A549 (cell line): ENCODE measurements at regions of chr11 and their contacts with region 1.

Region 1: DNA sequence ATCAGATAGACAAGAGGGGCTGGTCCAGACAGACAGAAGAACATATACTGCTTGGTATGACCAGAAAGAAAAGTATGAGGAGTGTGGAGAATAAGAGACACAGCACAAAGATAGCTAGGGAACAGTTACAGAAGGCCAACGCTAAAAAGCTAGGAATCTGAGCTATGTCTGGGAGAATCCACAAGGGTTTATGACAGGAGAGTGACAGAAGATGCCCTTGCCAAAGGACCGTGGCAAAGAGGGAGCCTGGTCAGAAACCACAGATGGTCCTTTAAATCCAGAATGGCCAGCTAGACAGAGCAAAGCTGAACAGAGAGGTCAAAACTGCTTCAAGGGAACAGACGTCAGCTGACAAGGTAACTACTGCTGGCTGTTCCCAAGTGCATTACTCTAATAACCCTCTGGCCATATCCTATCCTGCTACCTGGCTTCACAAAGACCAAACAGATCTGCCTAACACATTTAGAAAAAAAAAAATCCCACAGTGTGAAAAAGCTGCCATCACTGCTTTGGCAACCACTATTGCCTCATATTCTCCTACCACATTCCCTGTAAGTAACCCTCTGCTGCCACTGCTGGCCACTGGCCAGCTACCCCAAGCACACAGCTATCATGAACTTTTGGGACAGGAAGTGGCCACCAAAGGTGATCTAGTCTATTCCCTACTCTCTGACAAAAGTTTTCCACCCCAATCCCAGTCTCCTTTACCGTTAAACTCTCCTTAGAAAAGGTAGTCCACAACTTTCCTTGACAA is 7.3 kb downstream of the SERGEF start:
- DNase-seq: no peak
- ATAC-seq: peak in 1 of 2 experiments; percentile 58; a peak in 1 of 6 replicates
- H3K4me3 ChIP-seq: no peak overlapping the region
- H3K27ac ChIP-seq: no peak overlapping the region
- H3K4me1 ChIP-seq: no peaks in the 10 kb centered on the region
- CTCF ChIP-seq: no peak
- EP300 ChIP-seq: no peak
- POLR2A ChIP-seq: no peak
- RAD21 ChIP-seq: no peak

Region 2: DNA sequence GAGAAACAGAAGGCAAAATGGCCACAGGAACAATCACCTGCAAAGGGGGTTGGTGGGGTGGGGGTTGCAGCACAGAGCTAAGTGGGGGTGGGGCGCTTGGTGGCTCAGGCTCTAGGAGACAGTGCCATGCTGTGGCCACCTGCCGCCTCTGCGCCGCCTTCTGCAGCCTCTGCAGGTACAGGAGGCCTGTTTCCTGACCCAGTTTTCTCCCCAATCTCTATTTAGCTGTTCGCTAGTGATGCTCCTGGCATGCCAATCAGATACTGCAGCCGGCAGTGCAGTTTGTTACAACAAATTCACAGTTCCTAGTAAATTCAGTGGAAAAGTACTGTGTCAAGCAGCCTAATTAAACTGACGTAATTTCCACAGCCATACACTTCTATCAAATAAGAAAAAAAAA is 99.1 kb before region 1 on chr11:
- CTCF ChIA-PET with region 1: no interaction called
- POLR2A ChIA-PET with region 1: no interaction called
- DNase-seq: peak in 1 of 2 experiments; percentile 20
- ATAC-seq: peak; percentile 68 to 77; a peak in 4 of 6 replicates
- H3K4me3 ChIP-seq: no peak overlapping the region
- H3K27ac ChIP-seq: no peak overlapping the region
- H3K4me1 ChIP-seq: no peaks in the 10 kb centered on the region
- CTCF ChIP-seq: no peak
- EP300 ChIP-seq: no peak
- POLR2A ChIP-seq: no peak
- RAD21 ChIP-seq: peak in 1 of 2 experiments; percentile 30; a peak in 2 of 5 replicates

Region 3: DNA sequence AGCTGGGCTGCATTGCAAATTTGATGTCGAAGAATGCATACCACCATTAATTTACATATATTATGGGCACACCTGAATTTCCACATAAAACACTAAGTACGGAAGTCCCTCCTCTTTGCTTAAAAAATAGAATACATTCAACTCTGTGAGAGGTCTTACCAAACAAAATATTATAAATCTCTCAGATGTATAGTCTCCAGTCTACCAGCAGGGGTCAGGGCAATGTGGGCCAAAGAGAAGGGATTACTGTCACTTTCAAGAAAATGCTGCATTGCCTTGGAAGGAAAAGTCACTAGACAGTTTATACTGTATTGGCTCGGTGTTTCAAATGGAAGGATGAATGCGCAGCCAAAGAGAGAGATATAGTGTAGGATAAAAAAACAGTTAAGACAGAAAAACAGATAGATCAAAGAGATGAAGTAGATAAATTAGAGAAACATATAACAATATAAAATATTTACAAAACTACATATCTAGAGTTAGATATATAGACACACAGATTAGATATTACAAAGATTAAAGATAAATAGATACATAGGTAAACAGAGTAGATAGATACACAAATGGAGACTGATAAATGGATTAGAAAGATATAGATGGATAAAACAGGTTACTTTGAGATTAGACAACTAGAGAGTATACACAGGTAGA is 13.6 kb before region 1 on chr11:
- CTCF ChIA-PET with region 1: interaction called, 12 read pairs
- POLR2A ChIA-PET with region 1: no interaction called
- DNase-seq: peak; percentile 65 to 70
- ATAC-seq: peak; percentile 62 to 88; a peak in 4 of 6 replicates
- H3K4me3 ChIP-seq: no peak overlapping the region
- H3K27ac ChIP-seq: no peak overlapping the region
- H3K4me1 ChIP-seq: no peaks in the 10 kb centered on the region
- CTCF ChIP-seq: peak; percentile 82
- EP300 ChIP-seq: no peak
- POLR2A ChIP-seq: no peak
- RAD21 ChIP-seq: peak; percentile 58 to 63

Region 4: DNA sequence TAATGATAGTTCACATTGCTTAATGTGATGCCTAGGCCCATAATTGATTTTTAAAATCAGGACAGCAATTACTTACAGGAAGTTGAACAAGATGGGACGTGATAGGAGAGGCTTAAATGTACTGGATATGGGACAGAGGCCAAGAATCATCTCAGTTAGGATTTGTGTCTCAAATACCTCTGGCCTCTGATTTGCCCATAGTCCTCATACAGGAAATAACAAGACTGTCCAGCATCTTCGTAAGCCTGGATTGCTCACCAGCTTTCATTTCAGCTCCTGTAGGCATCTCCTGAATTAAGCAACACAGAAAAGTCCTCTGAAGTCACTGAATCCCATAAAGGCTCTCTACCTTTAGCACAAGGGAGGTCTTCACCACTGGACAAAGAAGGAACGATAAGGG is 126.8 kb after region 1 on chr11 and contains the start of gene MRGPRX3:
- CTCF ChIA-PET with region 1: no interaction called
- POLR2A ChIA-PET with region 1: no interaction called
- DNase-seq: no peak
- ATAC-seq: no peak
- H3K4me3 ChIP-seq: no peak within 1 kb of the TSS
- H3K27ac ChIP-seq: no peak within 1 kb of the TSS
- H3K4me1 ChIP-seq: no peaks in the 10 kb centered on the region
- CTCF ChIP-seq: no peak
- EP300 ChIP-seq: no peak
- POLR2A ChIP-seq: no peak
- RAD21 ChIP-seq: no peak
- polyA plus RNA-seq, gene MRGPRX3: 0.08 TPM in 1 of 2 replicates, not detected in the other

Region 5: DNA sequence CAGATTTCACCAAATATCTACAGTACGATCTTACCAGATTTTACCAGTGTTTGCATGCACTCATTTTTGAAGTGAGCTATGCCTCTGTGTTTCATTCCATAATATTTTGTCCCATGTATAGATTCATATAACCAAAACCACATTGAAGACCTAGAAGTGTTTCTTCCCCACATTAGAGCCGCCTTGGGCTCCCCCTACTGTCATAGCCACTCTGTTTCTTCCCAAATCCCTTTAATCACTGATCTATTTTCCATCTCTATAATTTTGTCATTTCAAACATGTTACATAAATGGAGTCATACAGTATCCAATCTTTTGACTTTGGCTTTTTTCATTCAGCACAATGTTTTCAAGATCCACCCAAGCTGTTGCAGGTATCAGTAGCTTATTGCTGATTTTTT is 139.5 kb after region 1 on chr11:
- CTCF ChIA-PET with region 1: no interaction called
- POLR2A ChIA-PET with region 1: no interaction called
- DNase-seq: peak; percentile 7 to 11
- ATAC-seq: peak; percentile 60 to 62; a peak in 2 of 6 replicates
- H3K4me3 ChIP-seq: no peak overlapping the region
- H3K27ac ChIP-seq: no peak overlapping the region
- H3K4me1 ChIP-seq: no peaks in the 10 kb centered on the region
- CTCF ChIP-seq: peak; percentile 29; the same call in 1 of the 3 replicates
- EP300 ChIP-seq: no peak
- POLR2A ChIP-seq: no peak
- RAD21 ChIP-seq: no peak